ENCODE measurements at regions of chr1 and their contacts with region 1.

Region 1: DNA sequence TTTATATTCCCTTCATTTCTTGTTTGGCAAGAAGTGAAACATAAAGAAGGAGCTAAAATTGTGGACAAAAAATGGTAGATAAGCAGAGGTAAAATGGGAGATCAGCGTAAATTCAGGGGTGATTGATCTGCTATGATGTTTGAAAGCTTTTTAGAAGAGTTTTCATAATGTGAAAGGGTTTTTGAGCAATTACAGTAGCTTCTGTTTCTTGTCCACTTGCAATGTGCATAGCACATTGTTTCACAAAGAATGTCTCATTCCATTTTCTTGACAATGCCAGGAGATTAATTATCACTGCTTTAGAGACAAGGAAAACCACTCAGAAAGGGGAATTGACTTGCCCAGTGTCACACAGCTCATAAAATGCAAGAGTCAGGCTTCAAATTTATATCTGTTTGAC is 65.9 kb upstream of the PLPPR4 start:
- DNase-seq: no peak
- ATAC-seq: no peak
- H3K4me3 ChIP-seq: no peak overlapping the region
- H3K27ac ChIP-seq: no peak overlapping the region
- H3K4me1 ChIP-seq: no peaks in the 10 kb centered on the region
- H3K27me3 ChIP-seq: no peaks in the 10 kb centered on the region
- CTCF ChIP-seq: no peak

Region 2: GRCh38 chr1:99082366-99082765 is 116.0 kb before region 1 on chr1:
- intact Hi-C with region 1: no loop called
- DNase-seq: peak in 2 of 4 donors; percentile 41 to 63
- ATAC-seq: no peak
- H3K4me3 ChIP-seq: no peak overlapping the region
- H3K27ac ChIP-seq: no peak overlapping the region
- H3K4me1 ChIP-seq: no peaks in the 10 kb centered on the region
- H3K27me3 ChIP-seq: no peaks in the 10 kb centered on the region
- CTCF ChIP-seq: no peak

Region 3: GRCh38 chr1:99707535-99708142 is 509.2 kb after region 1 on chr1:
- intact Hi-C with region 1: loop called in 1 of 2 experiments (anchors 10 kb)
- DNase-seq: peak in 3 of 4 donors; percentile 44 to 73 (median 58)
- ATAC-seq: peak; percentile 96
- H3K4me3 ChIP-seq: no peak overlapping the region
- H3K27ac ChIP-seq: no peak overlapping the region
- H3K4me1 ChIP-seq: peaks cover 0 to 14% of the 10 kb centered on the region in 2 donors
- H3K27me3 ChIP-seq: no peaks in the 10 kb centered on the region
- CTCF ChIP-seq: peak; percentile 79 to 80